HCT116 (cell line): ENCODE measurements at regions of chr6 and their contacts with region 1.

Region 1: DNA sequence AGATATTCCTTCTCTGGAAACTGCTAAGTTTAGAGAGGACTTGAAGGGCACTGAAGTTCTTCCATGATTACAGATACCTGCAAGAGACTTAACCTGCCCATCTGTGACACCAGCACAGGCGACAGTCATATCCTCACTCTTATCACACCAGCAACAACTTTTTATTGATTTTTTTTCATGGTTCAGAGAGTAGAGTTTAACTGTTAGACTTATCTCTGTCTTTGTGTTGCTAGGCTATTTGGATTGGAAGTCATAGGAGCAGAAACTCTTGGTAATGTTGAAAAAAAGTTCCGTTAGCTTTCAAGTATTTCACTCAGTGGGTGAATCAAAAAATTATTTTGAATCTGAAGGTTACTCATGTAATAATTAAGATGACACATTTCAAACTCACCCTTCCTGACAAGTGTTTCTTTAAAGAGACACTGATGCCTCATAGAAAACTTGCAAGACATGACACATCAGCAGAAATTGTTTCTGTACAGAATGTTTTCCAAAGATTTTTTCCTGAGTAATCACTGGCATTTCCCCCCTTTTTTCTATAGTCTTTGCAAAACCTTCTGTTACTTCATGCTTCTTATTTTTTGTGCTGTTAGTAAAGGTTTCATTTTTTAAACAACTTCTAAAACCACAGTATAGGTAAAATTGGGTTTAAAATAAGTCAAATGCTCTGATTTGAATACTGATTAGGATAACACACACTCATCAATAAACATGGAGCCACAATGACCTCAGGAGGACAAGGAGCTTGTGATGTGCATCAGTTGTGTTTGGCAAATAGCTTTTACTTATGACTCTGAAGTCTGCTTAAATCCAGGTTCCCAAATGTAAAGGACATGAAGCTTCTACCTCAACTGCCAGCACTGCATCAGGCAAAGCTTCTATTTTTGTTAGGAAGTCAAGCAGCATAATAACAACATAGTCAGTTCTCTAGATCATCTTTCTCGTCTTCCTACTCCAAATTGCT is 252.9 kb upstream of the MAN1A1 start:
- DNase-seq: no peak
- ATAC-seq: no peak
- H3K4me3 ChIP-seq: no peak overlapping the region
- H3K27ac ChIP-seq: no peak overlapping the region
- H3K4me1 ChIP-seq: no peaks in the 10 kb centered on the region
- H3K27me3 ChIP-seq: no peaks in the 10 kb centered on the region
- CTCF ChIP-seq: no peak
- POLR2A ChIP-seq: no peak
- RAD21 ChIP-seq: no peak

Region 2: GRCh38 chr6:118574051-118574865 is 1028.2 kb before region 1 on chr6:
- CTCF ChIA-PET with region 1: no interaction called
- POLR2A ChIA-PET with region 1: no interaction called
- RAD21 ChIA-PET with region 1: no interaction called
- intact Hi-C with region 1: no loop called
- DNase-seq: no peak
- ATAC-seq: no peak
- H3K4me3 ChIP-seq: no peak overlapping the region
- H3K27ac ChIP-seq: peak overlapping the region; percentile 30; the same call in 1 of the 2 replicates
- H3K4me1 ChIP-seq: no peaks in the 10 kb centered on the region
- H3K27me3 ChIP-seq: no peaks in the 10 kb centered on the region
- CTCF ChIP-seq: no peak
- POLR2A ChIP-seq: no peak
- RAD21 ChIP-seq: no peak

Region 3: GRCh38 chr6:119360262-119360915 is 242.1 kb before region 1 on chr6:
- CTCF ChIA-PET with region 1: no interaction called
- POLR2A ChIA-PET with region 1: no interaction called
- RAD21 ChIA-PET with region 1: no interaction called
- intact Hi-C with region 1: no loop called
- DNase-seq: no peak
- ATAC-seq: no peak
- H3K4me3 ChIP-seq: no peak overlapping the region
- H3K27ac ChIP-seq: no peak overlapping the region
- H3K4me1 ChIP-seq: no peaks in the 10 kb centered on the region
- H3K27me3 ChIP-seq: no peaks in the 10 kb centered on the region
- CTCF ChIP-seq: no peak
- POLR2A ChIP-seq: no peak
- RAD21 ChIP-seq: no peak

Region 4: GRCh38 chr6:119636060-119636459 is 33.6 kb after region 1 on chr6:
- CTCF ChIA-PET with region 1: no interaction called
- POLR2A ChIA-PET with region 1: no interaction called
- RAD21 ChIA-PET with region 1: no interaction called
- intact Hi-C with region 1: loop called (anchors 1 kb)
- DNase-seq: no peak
- ATAC-seq: no peak
- H3K4me3 ChIP-seq: no peak overlapping the region
- H3K27ac ChIP-seq: no peak overlapping the region
- H3K4me1 ChIP-seq: no peaks in the 10 kb centered on the region
- H3K27me3 ChIP-seq: no peaks in the 10 kb centered on the region
- CTCF ChIP-seq: no peak
- POLR2A ChIP-seq: no peak
- RAD21 ChIP-seq: no peak

Region 5: GRCh38 chr6:119781365-119781764 is 178.9 kb after region 1 on chr6:
- CTCF ChIA-PET with region 1: no interaction called
- POLR2A ChIA-PET with region 1: no interaction called
- RAD21 ChIA-PET with region 1: no interaction called
- intact Hi-C with region 1: no loop called
- DNase-seq: no peak
- ATAC-seq: no peak
- H3K4me3 ChIP-seq: no peak overlapping the region
- H3K27ac ChIP-seq: no peak overlapping the region
- H3K4me1 ChIP-seq: no peaks in the 10 kb centered on the region
- H3K27me3 ChIP-seq: no peaks in the 10 kb centered on the region
- CTCF ChIP-seq: no peak
- POLR2A ChIP-seq: no peak
- RAD21 ChIP-seq: no peak